Heart right ventricle (tissue), 16 donors: ENCODE measurements at regions of chr9 and their contacts with region 1.

Region 1: GRCh38 chr9:132354637-132355355 is at the start of gene SETX:
- DNase-seq: peak; percentile 96 to 98
- ATAC-seq: peak; percentile 98 to 99 (median 98)
- H3K4me3 ChIP-seq: peak within 1 kb of the TSS; percentile 67 to 100 (median 82)
- H3K27ac ChIP-seq: peak within 1 kb of the TSS; percentile 73 to 99 (median 96)
- H3K4me1 ChIP-seq: peaks cover 11 to 47% (median 37%) of the 10 kb centered on the region in 9 donors
- H3K27me3 ChIP-seq: no peaks in the 10 kb centered on the region
- CTCF ChIP-seq: peak in 1 of 9 donors; percentile 8
- total RNA-seq, gene SETX: 20.2 to 35.1 (median 28.1) TPM

Region 2: GRCh38 chr9:132160802-132161742 is 193.7 kb before region 1 on chr9:
- intact Hi-C with region 1: no loop called
- DNase-seq: no peak
- ATAC-seq: peak in 1 of 8 donors; percentile 32
- H3K4me3 ChIP-seq: peak overlapping the region in 9 of 10 donors; percentile 54 to 82 (median 68)
- H3K27ac ChIP-seq: peak overlapping the region in 3 of 10 donors; percentile 16 to 62 (median 43)
- H3K4me1 ChIP-seq: peaks cover 21 to 40% (median 35%) of the 10 kb centered on the region in 9 donors
- H3K27me3 ChIP-seq: peaks cover 6 to 80% (median 59%) of the 10 kb centered on the region in 7 donors
- CTCF ChIP-seq: no peak

Region 3: GRCh38 chr9:132312873-132313272 is 41.9 kb before region 1 on chr9:
- intact Hi-C with region 1: no loop called
- DNase-seq: no peak
- ATAC-seq: no peak
- H3K4me3 ChIP-seq: no peak overlapping the region
- H3K27ac ChIP-seq: no peak overlapping the region
- H3K4me1 ChIP-seq: peaks cover 0 to 4% (median 0%) of the 10 kb centered on the region in 9 donors
- H3K27me3 ChIP-seq: no peaks in the 10 kb centered on the region
- CTCF ChIP-seq: peak in 1 of 9 donors; percentile 10

Region 4: GRCh38 chr9:132372177-132373095 is 17.6 kb after region 1 on chr9:
- intact Hi-C with region 1: loop called in 1 of 10 experiments (anchors 1 kb)
- DNase-seq: peak; percentile 30 to 72
- ATAC-seq: peak; percentile 92 to 98 (median 96)
- H3K4me3 ChIP-seq: peak overlapping the region in 2 of 10 donors; percentile 14 to 19
- H3K27ac ChIP-seq: peak overlapping the region in 9 of 10 donors; percentile 53 to 88 (median 78)
- H3K4me1 ChIP-seq: peaks cover 0 to 22% (median 13%) of the 10 kb centered on the region in 9 donors
- H3K27me3 ChIP-seq: no peaks in the 10 kb centered on the region
- CTCF ChIP-seq: no peak

Region 5: DNA sequence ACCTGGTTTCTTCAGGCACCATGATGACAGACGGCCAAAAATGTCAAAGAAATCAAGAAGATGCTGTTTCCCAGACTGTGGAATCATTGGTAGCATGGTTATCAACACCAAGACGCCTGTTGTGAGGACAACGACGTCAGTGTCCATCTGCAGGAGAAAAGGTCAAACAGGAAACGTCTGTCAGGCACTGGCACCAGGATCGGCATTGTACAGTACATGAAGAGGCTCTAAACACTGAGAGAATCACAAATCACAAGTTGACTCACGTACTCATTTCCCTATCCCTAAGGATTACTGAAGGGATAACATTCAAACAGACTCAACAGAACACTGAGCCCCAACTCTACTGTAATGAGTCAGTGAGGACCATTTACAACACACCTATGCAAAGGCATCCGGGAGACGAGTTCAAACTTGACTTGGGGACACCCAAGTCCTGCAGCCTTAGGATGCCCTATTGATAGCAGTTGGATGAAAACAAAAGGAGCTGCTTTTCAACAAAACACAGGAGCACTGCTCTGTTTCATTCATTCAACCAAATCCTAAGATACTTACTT is 568.6 kb after region 1 on chr9:
- intact Hi-C with region 1: no loop called
- DNase-seq: no peak
- ATAC-seq: no peak
- H3K4me3 ChIP-seq: no peak overlapping the region
- H3K27ac ChIP-seq: no peak overlapping the region
- H3K4me1 ChIP-seq: peaks cover 0 to 10% (median 0%) of the 10 kb centered on the region in 9 donors
- H3K27me3 ChIP-seq: no peaks in the 10 kb centered on the region
- CTCF ChIP-seq: no peak

Region 6: GRCh38 chr9:132944302-132945185 is 589.7 kb after region 1 on chr9 and contains the start of gene TSC1:
- intact Hi-C with region 1: loop called in 1 of 10 experiments (anchors 10 kb)
- DNase-seq: peak; percentile 97 to 99
- ATAC-seq: peak; percentile 93 to 97 (median 94)
- H3K4me3 ChIP-seq: peak within 1 kb of the TSS; percentile 73 to 100 (median 99)
- H3K27ac ChIP-seq: peak within 1 kb of the TSS; percentile 82 to 100 (median 98)
- H3K4me1 ChIP-seq: peaks cover 0 to 62% (median 35%) of the 10 kb centered on the region in 9 donors
- H3K27me3 ChIP-seq: no peaks in the 10 kb centered on the region
- CTCF ChIP-seq: peak in 1 of 9 donors; percentile 14
- total RNA-seq, gene TSC1: 40.2 to 72.9 (median 55.5) TPM

Region 7: GRCh38 chr9:133478851-133479711 is 1124.3 kb after region 1 on chr9 and contains the start of gene SLC2A6:
- intact Hi-C with region 1: loop called in 1 of 10 experiments (anchors 5 kb)
- DNase-seq: peak; percentile 80 to 88
- ATAC-seq: peak; percentile 95 to 98 (median 98)
- H3K4me3 ChIP-seq: peak within 1 kb of the TSS; percentile 53 to 77 (median 65)
- H3K27ac ChIP-seq: peak within 1 kb of the TSS; percentile 33 to 90 (median 85)
- H3K4me1 ChIP-seq: peaks cover 7 to 55% (median 18%) of the 10 kb centered on the region in 9 donors
- H3K27me3 ChIP-seq: peaks cover 0 to 7% (median 0%) of the 10 kb centered on the region in 7 donors
- CTCF ChIP-seq: no peak
- total RNA-seq, gene SLC2A6: 1.3 to 7.0 (median 2.2) TPM